GM10248 (cell line): ENCODE measurements at regions of chr3 and their contacts with region 1.

Region 1: DNA sequence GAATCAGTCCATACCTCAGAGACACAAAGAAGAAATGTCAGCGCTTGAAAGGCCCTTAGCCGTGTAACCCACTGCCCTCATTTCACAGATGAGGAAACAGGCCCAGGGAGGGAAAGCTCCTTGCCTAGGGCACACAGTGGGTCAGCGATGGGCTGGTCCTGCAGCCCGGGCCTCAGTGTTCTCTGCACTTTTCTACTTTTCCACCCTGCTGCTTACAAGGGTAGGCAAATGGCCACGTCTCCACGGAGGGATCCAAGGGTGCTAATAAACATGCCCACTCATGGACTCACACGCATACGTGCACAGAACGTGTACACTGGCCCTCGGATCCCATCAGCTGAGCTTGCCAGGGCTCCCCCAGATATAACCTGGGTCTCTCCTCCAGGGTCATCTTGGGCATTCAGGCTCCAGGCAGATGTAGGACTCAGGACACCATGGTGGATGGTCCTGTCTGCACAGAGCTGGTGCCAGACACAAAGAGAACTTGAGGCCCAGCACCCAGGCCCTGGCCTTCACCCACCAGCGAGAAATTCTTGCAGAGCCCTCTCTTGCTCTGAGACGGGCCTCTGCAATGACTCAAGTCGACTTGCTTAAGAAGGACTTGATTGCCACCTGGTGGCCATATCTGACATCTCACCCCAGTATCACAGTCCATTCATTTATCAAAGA is 34.5 kb upstream of the VPS8 start:
- DNase-seq: peak; percentile 88
- CTCF ChIP-seq: peak; percentile 76

Region 2: DNA sequence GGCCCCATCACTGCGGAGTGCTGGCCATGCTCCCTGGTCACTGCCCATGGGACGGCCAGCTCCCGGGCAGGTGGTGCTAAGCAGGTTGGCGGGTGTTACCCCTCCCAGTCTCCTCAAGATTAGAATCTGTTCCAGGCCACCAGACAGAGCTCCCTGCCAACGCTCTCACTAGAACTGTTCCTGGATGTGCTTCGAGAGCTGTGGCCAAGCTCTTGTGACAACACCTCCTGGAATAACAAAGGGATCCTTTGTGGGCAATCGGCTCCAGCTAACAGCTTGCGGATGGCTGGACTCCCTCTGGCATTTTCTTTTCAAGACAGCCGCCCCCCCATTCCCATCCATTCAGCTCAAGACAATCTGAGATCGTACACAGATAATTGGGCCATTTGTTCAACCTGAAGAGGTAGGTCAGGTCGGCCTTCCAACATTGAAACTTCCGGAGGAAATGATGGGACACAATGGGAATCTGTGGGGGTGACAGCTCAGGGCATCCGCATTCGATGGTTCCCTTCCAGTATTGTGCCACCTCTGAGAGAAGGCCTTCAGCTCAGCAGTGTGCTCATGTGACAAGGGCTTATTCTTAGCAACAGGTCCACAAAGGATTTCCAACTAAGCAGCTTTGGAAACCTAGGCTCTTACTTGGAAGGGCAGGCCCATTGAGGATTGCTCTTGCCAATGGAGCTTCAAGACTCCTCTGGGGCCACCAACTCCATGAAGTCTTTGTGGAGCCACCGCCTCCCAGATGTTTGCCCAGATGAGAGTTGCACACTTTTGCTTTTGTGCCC is 227.5 kb before region 1 on chr3:
- CTCF ChIA-PET with region 1: interaction called, 14 read pairs
- POLR2A ChIA-PET with region 1: no interaction called
- DNase-seq: no peak
- CTCF ChIP-seq: no peak

Region 3: DNA sequence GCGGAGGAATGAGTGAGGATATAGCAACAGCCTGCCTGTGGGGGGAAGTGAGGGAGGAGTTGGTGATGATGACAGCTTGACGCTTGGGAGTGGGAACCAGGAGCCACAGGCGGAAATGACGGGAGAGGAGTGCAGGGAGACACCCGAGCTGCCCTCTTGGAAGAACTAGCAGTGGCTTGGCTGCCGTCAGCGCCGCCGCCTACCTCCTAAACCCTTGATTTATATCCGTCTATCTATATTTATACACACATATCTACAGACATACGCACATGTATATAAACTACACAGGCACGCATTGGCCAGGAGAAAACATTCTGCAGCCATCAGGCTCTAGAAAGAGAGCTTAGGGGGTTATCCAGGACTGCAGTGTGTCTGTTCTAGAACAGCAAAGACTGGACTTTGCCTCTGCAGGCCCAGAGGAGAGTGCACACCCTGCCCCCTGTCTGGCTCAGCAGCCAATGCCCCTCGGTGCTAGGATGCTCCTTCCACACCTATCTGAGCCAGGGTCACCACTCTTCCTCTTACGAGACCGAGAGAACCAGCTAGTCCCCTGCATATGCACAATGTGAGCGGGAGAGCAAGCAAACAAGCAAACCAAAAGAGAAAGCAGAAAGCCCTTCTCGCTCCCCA is 20.3 kb before region 1 on chr3:
- CTCF ChIA-PET with region 1: interaction called, 12 read pairs
- POLR2A ChIA-PET with region 1: no interaction called
- DNase-seq: no peak
- CTCF ChIP-seq: no peak